Activated CD4-positive, alpha-beta memory T cell treated with anti-CD3 and anti-CD28 coated beads for 36 hours (primary cell): ENCODE measurements at regions of chr2 and their contacts with region 1.

Region 1: DNA sequence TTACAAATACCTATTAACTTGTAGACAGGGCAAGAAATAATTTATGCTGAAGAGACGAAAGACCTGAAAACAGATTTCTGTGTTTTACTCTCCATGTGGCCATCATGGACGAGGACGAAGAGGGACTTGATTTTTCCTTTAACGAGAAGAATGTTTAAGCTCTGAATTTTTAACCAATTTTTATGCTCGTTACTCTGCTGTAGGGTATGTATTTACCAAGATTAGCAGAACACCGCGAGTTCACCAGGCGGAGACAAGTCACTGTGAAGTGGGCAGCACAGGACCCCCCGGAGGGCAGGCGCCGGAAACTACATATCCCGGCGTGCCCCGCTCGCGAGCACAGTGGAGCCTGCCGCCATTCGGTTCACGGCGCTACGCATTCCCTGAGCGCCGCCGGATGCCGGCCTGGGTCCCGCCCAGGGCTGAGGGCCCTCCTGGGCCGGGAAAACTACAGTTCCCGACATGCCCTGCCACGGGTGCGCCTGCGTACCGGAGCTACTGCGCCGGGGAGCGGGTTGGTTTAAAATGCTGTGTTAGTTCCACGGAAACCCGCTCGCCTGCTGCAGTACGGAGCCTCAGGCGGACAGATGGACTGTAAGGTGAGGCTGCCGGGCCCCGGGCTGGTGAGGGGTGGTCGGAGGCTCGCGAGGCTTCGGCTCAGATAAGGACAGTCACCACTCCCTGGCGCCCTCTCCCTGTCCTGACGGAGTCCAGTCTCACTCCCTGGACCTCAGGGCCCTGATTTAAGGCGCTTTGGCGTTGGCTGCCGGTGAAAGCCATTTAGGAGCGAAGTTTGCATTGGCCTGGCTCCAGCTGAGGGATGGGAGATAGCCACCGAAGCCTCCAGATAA is at the start of gene CCDC150:
- DNase-seq: peak; percentile 97
- H3K4me3 Mint-ChIP-seq: peak within 1 kb of the TSS; percentile 90
- H3K27ac Mint-ChIP-seq: peak within 1 kb of the TSS; percentile 62
- H3K4me1 Mint-ChIP-seq: peaks cover 15% of the 10 kb centered on the region
- H3K27me3 Mint-ChIP-seq: no peaks in the 10 kb centered on the region
- total RNA-seq, gene CCDC150: 13.2 to 13.9 TPM

Region 2: GRCh38 chr2:196592912-196593881 is 46.2 kb before region 1 on chr2:
- CTCF ChIA-PET with region 1: no interaction called
- POLR2A ChIA-PET with region 1: no interaction called
- intact Hi-C with region 1: loop called (anchors 2 kb)
- DNase-seq: peak; percentile 20
- H3K4me3 Mint-ChIP-seq: peak within 1 kb of the TSS; percentile 68
- H3K27ac Mint-ChIP-seq: no peak within 1 kb of the TSS
- H3K4me1 Mint-ChIP-seq: peaks cover 10% of the 10 kb centered on the region
- H3K27me3 Mint-ChIP-seq: peaks cover 60% of the 10 kb centered on the region

Region 3: GRCh38 chr2:196798980-196799379 is 159.6 kb after region 1 on chr2:
- CTCF ChIA-PET with region 1: no interaction called
- POLR2A ChIA-PET with region 1: no interaction called
- intact Hi-C with region 1: loop called (anchors 1 kb)
- DNase-seq: no peak
- H3K4me3 Mint-ChIP-seq: peak overlapping the region; percentile 94
- H3K27ac Mint-ChIP-seq: peak overlapping the region; percentile 83
- H3K4me1 Mint-ChIP-seq: peaks cover 41% of the 10 kb centered on the region
- H3K27me3 Mint-ChIP-seq: peaks cover 5% of the 10 kb centered on the region

Region 4: GRCh38 chr2:197453161-197453914 is 813.9 kb after region 1 on chr2 and contains the start of gene COQ10B:
- CTCF ChIA-PET with region 1: no interaction called
- POLR2A ChIA-PET with region 1: no interaction called
- intact Hi-C with region 1: loop called (anchors 5 kb)
- DNase-seq: peak; percentile 100
- H3K4me3 Mint-ChIP-seq: peak within 1 kb of the TSS; percentile 99
- H3K27ac Mint-ChIP-seq: peak within 1 kb of the TSS; percentile 100
- H3K4me1 Mint-ChIP-seq: peaks cover 39% of the 10 kb centered on the region
- H3K27me3 Mint-ChIP-seq: no peaks in the 10 kb centered on the region
- total RNA-seq, gene COQ10B: 21.5 TPM